Transverse colon (tissue), 4 donors: ENCODE measurements at regions of chr5 and their contacts with region 1.

Region 1: DNA sequence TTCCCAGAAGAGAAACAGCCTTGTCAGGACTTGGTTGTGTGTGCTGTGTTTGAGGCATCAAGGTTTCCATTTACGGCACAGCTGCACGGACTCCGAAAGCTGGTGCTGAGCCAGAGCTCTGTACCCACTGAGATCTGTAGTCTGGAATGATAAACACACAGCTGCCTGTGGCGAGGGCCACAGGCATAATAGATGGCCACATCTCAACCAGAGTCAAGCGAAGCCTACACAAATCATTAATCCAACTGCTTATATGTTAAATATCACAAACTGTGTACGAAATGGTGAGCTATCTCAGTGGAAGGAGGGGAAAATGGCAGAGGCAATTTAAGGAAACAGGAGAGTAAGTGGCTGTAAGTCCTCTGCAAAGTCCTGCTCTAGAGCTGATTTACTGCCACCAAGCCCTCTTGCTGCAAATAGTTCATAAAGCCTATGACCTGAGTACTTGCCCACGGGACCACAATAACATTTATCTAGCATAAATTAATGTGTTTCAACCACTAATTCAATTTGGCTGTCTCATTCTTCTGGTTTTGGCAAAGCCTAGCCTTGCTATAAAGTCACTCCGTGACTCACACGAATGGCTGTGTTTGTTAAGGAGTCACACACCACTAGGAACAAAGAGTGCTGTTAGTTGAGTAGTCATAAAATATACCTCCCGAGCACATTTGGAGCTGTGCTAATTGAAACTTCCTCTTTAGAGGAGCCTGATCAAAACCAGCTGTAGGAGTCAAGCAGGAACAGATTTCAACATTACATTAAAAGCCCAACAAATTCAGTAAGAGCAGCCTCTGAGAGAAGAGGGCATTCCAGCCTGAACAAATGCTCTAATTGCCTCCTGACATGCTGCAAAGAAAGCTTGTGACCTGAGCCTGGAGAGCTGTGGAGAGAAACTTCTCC is 738.6 kb upstream of the ZNF608 start:
- DNase-seq: peak; percentile 70
- H3K4me3 ChIP-seq: peak overlapping the region in 1 of 4 donors; percentile 11
- H3K27ac ChIP-seq: peak overlapping the region; percentile 87 to 91 (median 90)
- H3K4me1 ChIP-seq: peaks cover 18 to 31% (median 31%) of the 10 kb centered on the region in 4 donors
- H3K27me3 ChIP-seq: no peaks in the 10 kb centered on the region
- CTCF ChIP-seq: peak in 1 of 5 experiments; percentile 12
- EP300 ChIP-seq: peak; percentile 80
- POLR2A ChIP-seq: no peak

Region 2: DNA sequence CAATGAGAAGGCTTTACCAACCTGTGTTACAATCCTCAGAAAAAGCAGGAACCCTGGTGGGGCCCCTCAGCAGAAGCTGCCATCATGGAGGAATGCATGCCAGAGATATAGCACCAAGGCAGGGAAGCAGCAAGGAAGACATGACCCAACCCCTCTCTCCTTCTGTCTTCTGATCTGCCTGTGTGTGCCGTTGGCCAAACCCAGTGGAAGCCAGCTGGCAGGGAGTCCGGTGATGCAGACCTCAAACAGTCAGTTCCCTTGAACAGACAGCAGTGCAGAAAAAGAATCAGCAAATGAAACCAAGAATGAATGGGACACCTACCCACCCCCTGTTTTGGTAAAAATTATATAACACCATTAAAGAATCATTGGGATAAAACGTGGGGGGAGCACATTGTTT is 972.8 kb before region 1 on chr5:
- in situ Hi-C with region 1: no loop called
- intact Hi-C with region 1: no loop called
- DNase-seq: no peak
- H3K4me3 ChIP-seq: no peak overlapping the region
- H3K27ac ChIP-seq: no peak overlapping the region
- H3K4me1 ChIP-seq: peaks cover 0 to 5% (median 0%) of the 10 kb centered on the region in 4 donors
- H3K27me3 ChIP-seq: no peaks in the 10 kb centered on the region
- CTCF ChIP-seq: no peak
- EP300 ChIP-seq: no peak
- POLR2A ChIP-seq: no peak

Region 3: GRCh38 chr5:124741711-124742496 is 743.1 kb before region 1 on chr5:
- in situ Hi-C with region 1: no loop called
- intact Hi-C with region 1: loop called (anchors 5 kb)
- DNase-seq: peak; percentile 42
- H3K4me3 ChIP-seq: peak overlapping the region in 1 of 4 donors; percentile 73
- H3K27ac ChIP-seq: peak overlapping the region; percentile 94 to 98 (median 96)
- H3K4me1 ChIP-seq: peaks cover 10 to 82% (median 64%) of the 10 kb centered on the region in 4 donors
- H3K27me3 ChIP-seq: no peaks in the 10 kb centered on the region
- CTCF ChIP-seq: no peak
- EP300 ChIP-seq: no peak
- POLR2A ChIP-seq: no peak

Region 4: DNA sequence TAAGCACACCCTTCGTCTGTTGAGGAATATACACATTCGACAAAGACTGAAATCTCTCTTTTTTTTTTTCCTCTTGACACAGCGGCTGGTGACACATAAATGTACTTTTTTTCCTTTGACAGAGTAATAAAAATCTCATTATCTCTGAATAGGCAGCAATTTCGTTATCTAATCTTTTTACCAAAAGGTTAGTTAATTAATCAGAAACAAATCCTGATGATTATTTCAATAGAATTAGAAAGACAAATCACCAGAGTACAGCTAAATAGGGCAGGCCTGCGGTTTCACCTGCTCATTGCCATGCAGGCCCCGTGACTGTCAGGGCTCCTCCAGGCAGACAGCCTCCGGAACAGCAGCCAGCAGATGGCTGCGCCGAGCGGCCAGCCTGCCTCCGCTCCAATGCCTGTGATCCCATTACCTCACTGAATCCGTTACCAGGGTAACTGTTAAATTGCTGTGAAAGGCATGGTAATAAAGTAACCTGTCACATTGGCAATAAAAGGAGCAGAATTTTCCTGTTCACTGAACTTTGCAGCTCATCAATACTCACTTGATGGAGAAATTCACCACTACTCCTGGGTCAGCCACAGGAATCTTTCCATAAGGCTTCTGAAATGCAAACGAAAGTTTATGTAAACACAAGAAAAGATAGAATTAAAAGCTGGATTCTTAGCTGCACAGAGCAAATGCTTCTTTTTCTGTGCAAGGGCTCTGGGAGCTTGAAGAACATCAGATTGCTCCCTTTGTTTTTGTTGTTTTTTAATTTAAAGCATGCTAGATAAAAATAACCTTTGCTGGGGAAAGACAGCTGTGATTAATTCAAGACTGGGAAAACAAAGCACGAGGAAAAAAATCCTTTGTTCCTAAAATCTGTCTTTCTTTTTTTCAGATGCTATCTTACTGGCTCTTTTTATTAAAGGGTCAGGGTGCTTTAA is 72.2 kb before region 1 on chr5:
- in situ Hi-C with region 1: no loop called
- intact Hi-C with region 1: loop called (anchors 2 kb)
- DNase-seq: peak; percentile 79
- H3K4me3 ChIP-seq: peak overlapping the region in 1 of 4 donors; percentile 2
- H3K27ac ChIP-seq: peak overlapping the region; percentile 70 to 82 (median 74)
- H3K4me1 ChIP-seq: peaks cover 32 to 60% (median 53%) of the 10 kb centered on the region in 4 donors
- H3K27me3 ChIP-seq: no peaks in the 10 kb centered on the region
- CTCF ChIP-seq: peak; percentile 34 to 54 (median 37)
- EP300 ChIP-seq: no peak
- POLR2A ChIP-seq: no peak